ENCODE measurements at regions of chr3 and their contacts with region 1.

Region 1: DNA sequence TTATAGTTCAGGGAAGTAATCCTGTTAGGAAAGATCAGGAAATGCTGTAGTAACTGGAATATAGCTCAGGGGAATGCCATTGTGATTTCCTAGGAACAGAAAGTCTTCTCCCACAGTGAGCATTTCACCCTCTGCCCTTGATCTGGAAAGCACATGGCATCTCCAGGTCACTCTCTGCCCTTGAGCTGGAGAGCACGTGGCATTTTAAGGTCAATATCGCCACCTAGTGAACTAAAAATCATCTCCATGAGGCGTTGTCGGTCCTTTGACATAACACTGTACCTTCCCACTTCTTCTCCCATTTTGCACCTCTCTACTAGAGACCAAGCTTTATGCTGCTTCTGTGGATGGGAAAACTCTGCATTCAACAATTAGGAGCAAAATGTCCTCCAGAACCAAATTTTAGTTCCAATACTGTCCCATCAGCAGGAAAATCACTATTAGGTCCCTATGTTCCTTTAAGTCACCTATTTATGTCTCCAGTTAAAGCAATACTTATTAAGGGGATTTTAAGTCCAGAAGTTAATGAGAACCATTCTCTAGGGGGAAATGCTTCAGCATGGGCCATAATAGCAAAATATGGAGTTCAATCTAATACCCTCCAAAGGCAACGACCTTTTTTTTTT is 54.7 kb upstream of the GK5 start:
- DNase-seq: peak in 2 of 3 donors; percentile 25 to 46
- ATAC-seq: peak; percentile 81 to 88
- H3K4me3 ChIP-seq: no peak overlapping the region
- H3K27ac ChIP-seq: no peak overlapping the region
- H3K4me1 ChIP-seq: no peaks in the 10 kb centered on the region
- H3K27me3 ChIP-seq: no peaks in the 10 kb centered on the region

Region 2: GRCh38 chr3:141972399-141972798 is 307.7 kb before region 1 on chr3:
- intact Hi-C with region 1: no loop called
- DNase-seq: no peak
- ATAC-seq: no peak
- H3K4me3 ChIP-seq: no peak overlapping the region
- H3K27ac ChIP-seq: no peak overlapping the region
- H3K4me1 ChIP-seq: no peaks in the 10 kb centered on the region
- H3K27me3 ChIP-seq: no peaks in the 10 kb centered on the region

Region 3: DNA sequence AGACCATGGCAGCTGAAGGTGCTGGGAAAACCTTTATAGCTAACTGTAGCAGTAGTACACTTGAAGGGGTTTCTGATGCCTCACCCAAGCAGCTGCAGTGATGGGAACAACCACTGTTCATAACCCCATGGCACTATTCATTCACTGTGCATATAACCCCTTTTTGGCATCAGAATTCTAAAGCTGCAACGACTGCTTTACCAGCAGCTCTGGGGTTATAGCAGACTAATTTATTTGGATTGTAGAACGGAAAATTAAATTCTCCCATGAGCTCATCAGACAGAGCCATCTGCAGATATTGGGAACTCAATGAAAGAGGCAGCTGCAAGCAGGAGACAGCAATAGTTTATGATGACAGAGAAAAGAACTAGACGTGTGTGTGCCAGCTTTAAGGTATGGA is 159.4 kb before region 1 on chr3:
- intact Hi-C with region 1: loop called (anchors 2 to 10 kb)
- DNase-seq: no peak
- ATAC-seq: no peak
- H3K4me3 ChIP-seq: no peak overlapping the region
- H3K27ac ChIP-seq: no peak overlapping the region
- H3K4me1 ChIP-seq: no peaks in the 10 kb centered on the region
- H3K27me3 ChIP-seq: no peaks in the 10 kb centered on the region

Region 4: GRCh38 chr3:142129516-142130171 is 150.4 kb before region 1 on chr3:
- intact Hi-C with region 1: loop called (anchors 2 to 10 kb)
- DNase-seq: no peak
- ATAC-seq: no peak
- H3K4me3 ChIP-seq: no peak overlapping the region
- H3K27ac ChIP-seq: no peak overlapping the region
- H3K4me1 ChIP-seq: no peaks in the 10 kb centered on the region
- H3K27me3 ChIP-seq: no peaks in the 10 kb centered on the region

Region 5: DNA sequence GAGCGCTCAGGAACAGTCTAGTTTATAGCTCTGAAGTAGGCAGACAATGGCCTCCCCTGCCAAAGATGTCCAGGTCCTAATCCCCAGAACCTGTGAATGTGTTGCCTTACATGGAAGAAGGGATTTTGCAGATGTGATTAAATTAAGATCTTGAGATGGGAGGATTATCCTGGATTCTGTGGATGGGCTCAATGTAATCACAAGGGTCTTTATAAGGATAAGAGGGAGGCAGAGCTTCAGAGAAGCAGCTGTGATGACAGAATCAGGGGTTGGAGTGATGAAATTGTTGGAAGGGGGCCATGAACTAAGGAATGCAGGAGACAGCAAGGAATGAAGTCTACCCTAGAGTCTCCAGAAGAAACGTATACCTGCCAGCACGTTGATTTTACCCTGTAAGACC is 40.7 kb before region 1 on chr3:
- intact Hi-C with region 1: no loop called
- DNase-seq: no peak
- ATAC-seq: no peak
- H3K4me3 ChIP-seq: no peak overlapping the region
- H3K27ac ChIP-seq: no peak overlapping the region
- H3K4me1 ChIP-seq: no peaks in the 10 kb centered on the region
- H3K27me3 ChIP-seq: no peaks in the 10 kb centered on the region